ENCODE measurements at regions of chr11 and their contacts with region 1.

Region 1: DNA sequence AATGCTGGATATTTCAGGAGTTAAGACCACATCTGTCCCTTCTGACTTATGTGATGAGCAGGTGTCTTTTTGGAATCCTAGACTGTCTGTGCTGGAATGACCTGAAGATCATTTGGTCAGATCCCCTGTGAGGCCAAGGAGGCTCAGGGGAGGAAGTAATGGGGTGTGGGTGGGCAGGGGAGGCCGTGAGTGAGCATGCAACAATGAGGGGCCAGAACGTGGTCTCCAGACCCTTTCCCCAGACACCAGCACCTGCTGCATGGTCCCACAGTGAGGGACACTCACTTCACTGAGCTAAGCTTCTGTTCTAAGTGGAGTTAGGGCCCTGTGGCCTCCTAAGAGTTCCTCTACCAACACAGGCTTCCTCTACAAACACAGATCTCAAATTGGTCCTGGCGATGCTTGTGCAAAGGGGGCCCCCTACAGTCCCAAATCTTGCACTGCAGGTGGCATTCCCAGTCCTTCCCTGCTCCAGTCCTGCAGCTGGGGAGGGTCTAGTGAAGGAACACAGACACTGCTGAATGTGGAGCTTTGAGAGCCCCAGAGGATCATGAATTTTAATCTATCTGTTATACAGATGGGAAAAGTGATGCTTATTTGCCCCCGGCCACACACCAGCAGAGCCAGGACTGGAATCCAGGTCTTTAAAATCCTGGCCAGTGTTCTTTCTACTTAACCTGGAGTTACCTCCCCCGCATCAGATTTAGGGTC is 7.4 kb downstream of the USP2 start:
- DNase-seq: peak; percentile 12
- H3K4me3 ChIP-seq: no peak overlapping the region
- CTCF ChIP-seq: peak; percentile 96

Region 2: DNA sequence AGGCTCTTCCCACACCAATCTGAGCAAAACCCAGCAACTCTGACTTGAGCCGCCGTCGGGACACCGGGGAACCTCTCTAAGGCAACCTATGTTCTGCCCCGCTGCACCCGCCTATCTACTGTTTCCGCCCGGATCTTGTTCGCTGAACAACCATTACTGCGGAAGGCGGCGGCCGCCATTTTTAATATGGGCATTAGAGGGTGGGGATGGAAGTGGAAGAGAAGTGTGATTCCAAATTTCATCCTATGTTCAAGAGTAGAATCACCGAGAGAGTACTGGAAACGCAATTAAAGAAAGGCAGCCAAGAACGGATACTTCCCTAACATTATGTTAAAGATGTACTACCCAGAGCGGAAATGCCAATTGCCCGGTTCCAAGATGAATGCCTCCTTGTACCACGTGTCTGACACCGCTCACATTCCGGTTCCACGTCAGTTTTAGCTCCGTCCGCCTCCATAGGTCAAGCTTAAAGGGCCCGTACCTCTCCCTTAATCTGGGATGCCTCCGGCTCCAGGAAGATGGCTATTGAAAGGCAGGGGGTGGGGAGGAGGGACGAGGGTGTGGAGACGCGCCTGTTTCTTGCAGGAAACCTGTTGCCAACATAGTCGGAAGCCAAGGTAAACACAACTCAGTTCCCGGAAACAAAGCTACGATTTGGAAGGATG is 272.2 kb before region 1 on chr11 and contains the start of gene DPAGT1:
- CTCF ChIA-PET with region 1: no interaction called
- POLR2A ChIA-PET with region 1: no interaction called
- DNase-seq: peak; percentile 82
- H3K4me3 ChIP-seq: peak within 1 kb of the TSS; percentile 88
- CTCF ChIP-seq: no peak

Region 3: GRCh38 chr11:119363851-119364590 is 10.1 kb before region 1 on chr11:
- CTCF ChIA-PET with region 1: interaction called, 145 read pairs
- POLR2A ChIA-PET with region 1: interaction called, 4 read pairs
- DNase-seq: no peak
- H3K4me3 ChIP-seq: peak overlapping the region; percentile 50
- CTCF ChIP-seq: no peak

Region 4: DNA sequence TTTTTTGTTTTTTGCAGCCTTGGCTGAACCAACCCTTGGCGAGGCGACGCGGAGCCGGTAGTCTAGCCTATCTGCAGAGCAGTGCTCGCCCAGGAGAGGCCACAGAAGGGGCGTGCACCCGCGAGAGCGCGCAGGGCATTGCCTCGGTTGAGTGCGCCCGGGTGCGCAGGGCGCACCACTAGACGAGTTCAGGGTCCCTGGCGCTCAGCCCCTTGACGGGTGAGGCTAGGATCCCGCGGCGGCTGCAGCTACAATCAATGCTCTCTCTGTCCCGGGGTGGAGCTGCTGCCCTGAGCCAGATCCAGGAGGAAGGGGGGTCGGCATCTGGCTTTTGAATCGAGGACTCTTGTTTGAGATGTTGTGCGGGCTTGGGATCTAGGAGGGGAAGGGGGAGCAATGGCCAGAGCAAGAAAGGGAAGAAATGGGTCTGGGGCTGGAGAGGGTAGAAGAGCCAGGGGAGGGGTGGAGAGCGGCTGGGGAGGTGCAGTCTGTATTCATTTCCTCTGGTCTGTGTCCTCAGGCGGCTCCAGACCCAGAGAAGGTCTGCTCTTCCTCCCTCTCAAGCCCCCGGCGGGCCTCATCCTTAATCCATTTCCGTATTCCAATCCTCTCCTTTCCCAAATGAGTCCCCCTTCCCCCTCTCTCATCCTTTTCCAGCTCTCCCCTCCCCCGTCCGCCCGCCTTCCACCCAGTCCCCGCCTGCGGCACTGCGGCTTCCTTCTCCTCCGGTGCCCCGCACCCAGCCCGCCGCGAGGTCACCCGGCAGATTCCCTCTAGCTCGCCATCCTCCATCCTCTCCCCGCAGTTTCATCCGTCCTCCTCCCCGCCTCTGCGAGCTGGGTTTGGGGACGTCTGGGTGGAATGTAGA is 48.1 kb after region 1 on chr11:
- CTCF ChIA-PET with region 1: interaction called, 10 read pairs
- POLR2A ChIA-PET with region 1: no interaction called
- DNase-seq: no peak
- H3K4me3 ChIP-seq: peak overlapping the region; percentile 91
- CTCF ChIP-seq: no peak

Region 5: GRCh38 chr11:119432484-119433357 is 58.6 kb after region 1 on chr11:
- CTCF ChIA-PET with region 1: interaction called, 10 read pairs
- POLR2A ChIA-PET with region 1: no interaction called
- DNase-seq: no peak
- H3K4me3 ChIP-seq: peak overlapping the region; percentile 48
- CTCF ChIP-seq: no peak

Region 6: GRCh38 chr11:119460582-119460981 is 86.5 kb after region 1 on chr11:
- CTCF ChIA-PET with region 1: interaction called, 11 read pairs
- POLR2A ChIA-PET with region 1: no interaction called
- DNase-seq: peak; percentile 88
- H3K4me3 ChIP-seq: no peak overlapping the region
- CTCF ChIP-seq: no peak

Measured in AG04449 (cell line).